Caco-2 (cell line): ENCODE measurements at regions of chr1 and their contacts with region 1.

Region 1: GRCh38 chr1:202716654-202717053 is 6.4 kb upstream of the SYT2 start:
- DNase-seq: no peak
- H3K4me3 ChIP-seq: no peak overlapping the region
- H3K4me3 Mint-ChIP-seq: no peak overlapping the region
- H3K27ac Mint-ChIP-seq: no peak overlapping the region
- H3K4me1 ChIP-seq: no peaks in the 10 kb centered on the region
- H3K4me1 Mint-ChIP-seq: peaks cover 6% of the 10 kb centered on the region
- H3K27me3 ChIP-seq: no peaks in the 10 kb centered on the region; the same call in 1 of the 2 replicates
- H3K27me3 Mint-ChIP-seq: peaks cover 9% of the 10 kb centered on the region
- CTCF ChIP-seq: no peak

Region 2: DNA sequence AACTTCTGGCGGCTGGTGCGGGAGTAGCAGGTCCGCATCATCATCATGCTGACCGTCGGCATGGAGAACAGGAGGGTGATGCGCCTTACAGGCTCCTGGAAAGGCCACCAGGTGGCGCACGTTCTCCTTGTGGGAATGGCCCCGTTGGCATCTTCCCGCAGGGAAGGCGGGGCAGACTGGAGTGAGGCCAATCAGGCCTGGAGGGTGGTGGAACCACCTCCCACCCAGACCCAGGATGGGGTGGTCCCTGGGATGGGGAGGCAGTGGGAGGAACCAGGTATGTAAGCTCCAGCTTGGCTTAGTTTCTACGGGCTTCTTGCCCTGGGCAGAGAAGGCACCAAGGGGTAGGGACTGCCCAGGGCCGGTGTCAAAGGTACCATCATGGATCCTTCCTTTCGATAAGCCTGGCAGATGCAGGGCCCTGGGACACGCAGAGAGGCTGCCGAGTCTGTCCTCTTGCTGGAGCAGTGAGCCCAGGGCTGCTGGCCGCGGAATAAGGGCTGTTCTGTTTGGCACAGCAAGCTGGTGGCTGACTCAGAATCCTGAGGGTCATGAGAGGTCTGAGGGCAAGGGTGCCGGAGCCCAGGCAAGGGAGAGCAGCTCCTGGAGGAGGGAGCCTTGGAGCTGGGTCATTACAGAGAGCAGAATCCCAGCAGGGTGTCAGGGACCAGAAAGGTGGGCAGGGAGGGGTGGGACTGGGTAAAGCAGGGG is 531.7 kb before region 1 on chr1:
- CTCF ChIA-PET with region 1: interaction called, 4 read pairs
- POLR2A ChIA-PET with region 1: no interaction called
- intact Hi-C with region 1: loop called (anchors 1 kb)
- DNase-seq: peak; percentile 87 to 89
- H3K4me3 ChIP-seq: no peak overlapping the region
- H3K4me3 Mint-ChIP-seq: no peak overlapping the region
- H3K27ac Mint-ChIP-seq: no peak overlapping the region
- H3K4me1 ChIP-seq: peaks cover 9% of the 10 kb centered on the region
- H3K4me1 Mint-ChIP-seq: peaks cover 15% of the 10 kb centered on the region
- H3K27me3 ChIP-seq: no peaks in the 10 kb centered on the region
- H3K27me3 Mint-ChIP-seq: peaks cover 2% of the 10 kb centered on the region
- CTCF ChIP-seq: peak; percentile 88 to 92

Region 3: DNA sequence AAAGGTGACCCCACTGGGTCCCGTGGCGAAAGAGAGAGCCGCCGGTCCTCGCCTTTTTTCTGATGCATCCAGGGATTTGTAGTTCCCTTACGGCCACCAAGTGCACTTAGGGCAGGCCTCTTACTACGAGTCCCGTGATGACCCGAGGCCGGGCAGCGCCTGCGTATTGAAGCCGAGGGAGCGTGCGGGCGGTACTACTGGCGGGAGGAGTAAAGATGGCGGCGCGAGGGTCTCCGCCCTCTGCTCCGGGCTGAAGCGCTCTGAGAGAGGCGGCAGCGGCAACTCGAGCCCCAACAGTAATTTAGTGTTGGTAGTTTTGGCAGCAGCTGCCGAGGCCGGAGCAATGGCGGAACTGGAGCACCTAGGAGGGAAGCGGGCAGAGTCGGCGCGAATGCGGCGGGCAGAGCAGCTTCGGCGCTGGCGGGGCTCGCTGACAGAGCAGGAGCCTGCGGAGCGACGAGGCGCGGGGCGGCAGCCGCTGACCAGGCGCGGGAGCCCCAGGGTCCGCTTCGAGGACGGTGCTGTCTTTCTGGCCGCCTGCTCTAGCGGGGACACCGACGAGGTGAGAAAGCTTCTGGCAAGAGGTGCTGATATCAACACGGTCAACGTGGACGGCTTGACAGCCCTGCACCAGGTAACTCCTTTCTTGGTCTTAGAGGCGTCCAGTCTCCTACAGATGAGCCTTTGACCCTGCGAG is 368.0 kb before region 1 on chr1 and contains the start of gene PPP1R12B:
- CTCF ChIA-PET with region 1: interaction called, 3 read pairs
- POLR2A ChIA-PET with region 1: no interaction called
- intact Hi-C with region 1: loop called (anchors 1 kb)
- DNase-seq: peak; percentile 97 to 99
- H3K4me3 ChIP-seq: peak within 1 kb of the TSS; percentile 77
- H3K4me3 Mint-ChIP-seq: peak within 1 kb of the TSS; percentile 100
- H3K27ac Mint-ChIP-seq: peak within 1 kb of the TSS; percentile 98
- H3K4me1 ChIP-seq: peaks cover 9% of the 10 kb centered on the region
- H3K4me1 Mint-ChIP-seq: peaks cover 36% of the 10 kb centered on the region
- H3K27me3 ChIP-seq: no peaks in the 10 kb centered on the region
- H3K27me3 Mint-ChIP-seq: no peaks in the 10 kb centered on the region
- CTCF ChIP-seq: no peak
- total RNA-seq, gene PPP1R12B: 16.4 and 22.4 TPM in 2 replicates

Region 4: GRCh38 chr1:202462342-202463076 is 254.1 kb before region 1 on chr1:
- CTCF ChIA-PET with region 1: interaction called, 11 read pairs
- POLR2A ChIA-PET with region 1: no interaction called
- intact Hi-C with region 1: loop called (anchors 5 kb)
- DNase-seq: no peak
- H3K4me3 ChIP-seq: no peak overlapping the region
- H3K4me3 Mint-ChIP-seq: no peak overlapping the region
- H3K27ac Mint-ChIP-seq: no peak overlapping the region
- H3K4me1 ChIP-seq: peaks cover 8% of the 10 kb centered on the region
- H3K4me1 Mint-ChIP-seq: peaks cover 8% of the 10 kb centered on the region
- H3K27me3 ChIP-seq: no peaks in the 10 kb centered on the region
- H3K27me3 Mint-ChIP-seq: no peaks in the 10 kb centered on the region
- CTCF ChIP-seq: no peak

Region 5: DNA sequence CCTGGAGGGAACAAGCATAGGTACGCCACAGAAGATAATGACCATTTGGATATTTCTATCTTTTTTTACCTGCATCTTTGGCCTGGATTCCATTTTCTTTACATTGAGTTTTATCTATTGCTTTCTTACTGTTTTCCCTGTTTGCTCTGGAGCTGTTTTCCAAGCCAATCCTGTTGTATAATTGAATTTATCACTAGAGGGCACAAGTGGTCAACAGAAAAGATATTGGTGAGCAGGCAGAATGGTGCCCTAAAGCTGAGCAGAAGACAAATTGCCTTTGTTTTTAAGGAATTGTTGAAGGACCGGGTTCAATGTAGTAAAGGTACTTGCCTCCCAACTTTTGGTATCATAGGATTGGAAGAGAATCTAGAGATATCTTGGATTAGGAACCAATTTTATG is 215.4 kb before region 1 on chr1:
- CTCF ChIA-PET with region 1: no interaction called
- POLR2A ChIA-PET with region 1: no interaction called
- intact Hi-C with region 1: loop called (anchors 1 kb)
- DNase-seq: no peak
- H3K4me3 ChIP-seq: no peak overlapping the region
- H3K4me3 Mint-ChIP-seq: no peak overlapping the region
- H3K27ac Mint-ChIP-seq: no peak overlapping the region
- H3K4me1 ChIP-seq: peaks cover 10% of the 10 kb centered on the region
- H3K4me1 Mint-ChIP-seq: peaks cover 9% of the 10 kb centered on the region
- H3K27me3 ChIP-seq: no peaks in the 10 kb centered on the region
- H3K27me3 Mint-ChIP-seq: no peaks in the 10 kb centered on the region
- CTCF ChIP-seq: peak in 1 of 2 experiments; percentile 26

Region 6: DNA sequence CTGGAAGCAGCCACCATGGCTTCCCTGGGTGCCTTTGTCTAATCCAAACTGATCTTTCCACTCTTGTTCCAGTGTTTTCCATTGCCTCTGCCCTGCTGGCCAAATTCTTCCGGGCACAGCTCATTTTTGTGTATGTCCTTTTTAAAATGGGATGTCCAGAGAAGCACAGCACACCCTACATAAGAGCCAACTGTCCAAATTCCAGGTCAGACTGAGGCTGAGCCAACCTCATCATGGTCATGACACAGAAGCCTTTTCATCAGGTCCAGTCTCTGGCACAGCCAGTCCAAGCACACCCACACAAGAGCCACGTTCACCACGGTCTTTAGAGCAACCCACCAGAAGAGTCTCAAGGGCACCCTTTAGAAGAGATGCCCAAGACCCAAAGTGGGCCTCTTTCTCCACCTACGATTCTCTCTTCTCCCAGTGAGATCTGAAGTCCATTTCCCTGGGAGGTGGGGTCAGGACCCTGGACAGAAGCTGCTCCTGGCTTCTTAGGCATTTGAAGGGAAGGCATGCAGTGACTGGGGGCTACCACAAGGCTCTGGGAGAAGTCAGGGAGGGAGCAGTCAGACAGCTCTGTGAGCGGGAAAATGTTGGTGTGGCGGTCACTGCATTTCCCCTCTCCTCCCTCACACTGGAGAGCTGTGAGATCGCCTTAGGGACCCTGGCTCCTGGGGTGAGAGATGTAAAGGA is 59.6 kb before region 1 on chr1:
- CTCF ChIA-PET with region 1: interaction called, 43 read pairs
- POLR2A ChIA-PET with region 1: no interaction called
- intact Hi-C with region 1: loop called (anchors 1 kb)
- DNase-seq: peak; percentile 60 to 73
- H3K4me3 ChIP-seq: no peak overlapping the region
- H3K4me3 Mint-ChIP-seq: no peak overlapping the region
- H3K27ac Mint-ChIP-seq: no peak overlapping the region
- H3K4me1 ChIP-seq: no peaks in the 10 kb centered on the region
- H3K4me1 Mint-ChIP-seq: no peaks in the 10 kb centered on the region
- H3K27me3 ChIP-seq: no peaks in the 10 kb centered on the region; the same call in 1 of the 2 replicates
- H3K27me3 Mint-ChIP-seq: peaks cover 18% of the 10 kb centered on the region
- CTCF ChIP-seq: peak; percentile 44 to 45

Region 7: DNA sequence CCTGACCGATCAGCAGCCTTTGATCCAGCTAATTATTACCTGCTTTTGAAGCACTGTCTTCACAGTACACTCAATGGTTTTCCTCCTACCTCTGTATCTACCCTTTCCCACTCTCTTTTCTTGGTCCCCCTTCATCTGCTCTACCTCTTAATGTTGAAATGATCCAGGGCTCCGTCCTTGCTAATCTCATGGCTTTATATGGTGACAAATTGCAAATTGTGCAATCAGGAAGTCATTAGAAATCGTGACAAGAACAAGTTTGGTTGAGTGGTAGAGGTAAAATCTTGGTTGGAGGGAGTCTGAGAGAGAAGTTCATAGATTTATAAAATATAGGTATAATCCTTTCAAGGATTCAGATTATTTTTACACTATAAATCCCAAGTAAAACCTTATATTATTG is 260.0 kb after region 1 on chr1:
- CTCF ChIA-PET with region 1: no interaction called
- POLR2A ChIA-PET with region 1: no interaction called
- intact Hi-C with region 1: no loop called
- DNase-seq: no peak
- H3K4me3 ChIP-seq: no peak overlapping the region
- H3K4me3 Mint-ChIP-seq: no peak overlapping the region
- H3K27ac Mint-ChIP-seq: no peak overlapping the region
- H3K4me1 ChIP-seq: no peaks in the 10 kb centered on the region
- H3K4me1 Mint-ChIP-seq: no peaks in the 10 kb centered on the region
- H3K27me3 ChIP-seq: 0 out of 2 replicates have a peak, but pooled peaks cover 1% of the 10 kb centered on the region
- H3K27me3 Mint-ChIP-seq: peaks cover 34% of the 10 kb centered on the region
- CTCF ChIP-seq: no peak